Activated CD4-positive, alpha-beta T cell treated with anti-CD3 and anti-CD28 coated beads for 36 hours (primary cell): ENCODE measurements at regions of chr20 and their contacts with region 1.

Region 1: DNA sequence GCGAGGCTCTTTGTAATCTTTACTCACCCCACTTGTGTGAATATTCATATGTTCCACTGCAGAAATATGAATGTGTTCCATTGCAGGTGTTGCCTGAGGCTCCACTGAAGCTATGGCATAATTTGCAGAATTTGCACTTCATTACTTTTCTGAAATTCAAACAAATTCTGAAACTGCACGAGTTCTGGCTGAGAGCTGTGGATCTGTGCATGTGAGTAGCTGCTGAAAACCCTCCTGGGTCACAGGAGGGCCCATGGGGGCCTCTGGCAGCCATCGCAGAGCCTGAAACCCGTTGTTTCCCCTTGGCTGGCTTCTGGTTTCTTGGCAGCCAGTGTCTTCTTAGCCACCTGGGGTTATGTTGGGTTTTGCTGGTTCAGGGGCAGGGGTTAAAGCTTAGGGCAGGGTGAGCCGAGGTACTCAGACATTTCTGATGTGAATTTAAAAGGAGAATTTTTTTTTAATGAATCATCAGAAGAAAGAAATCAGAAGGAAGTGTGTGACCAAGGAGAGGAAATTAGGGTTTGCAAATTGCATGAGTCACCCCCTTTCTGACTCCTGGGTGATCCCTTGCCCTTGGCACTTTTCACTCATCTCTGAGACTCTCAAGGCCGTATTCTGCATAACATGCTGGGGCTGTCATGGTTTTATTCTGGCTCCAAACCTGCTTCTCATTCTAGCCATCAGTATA is 40.6 kb downstream of the TOX2 start:
- DNase-seq: peak; percentile 72
- ATAC-seq: peak; percentile 93
- H3K4me3 Mint-ChIP-seq: peak overlapping the region; percentile 8
- H3K27ac Mint-ChIP-seq: peak overlapping the region; percentile 71
- H3K4me1 Mint-ChIP-seq: peaks cover 76% of the 10 kb centered on the region
- H3K27me3 Mint-ChIP-seq: peaks cover 35% of the 10 kb centered on the region

Region 2: GRCh38 chr20:43914311-43915210 is 40.6 kb before region 1 on chr20 and contains the start of gene TOX2:
- CTCF ChIA-PET with region 1: no interaction called
- POLR2A ChIA-PET with region 1: no interaction called
- intact Hi-C with region 1: loop called in 1 of 2 experiments (anchors 2 kb)
- DNase-seq: peak; percentile 63
- ATAC-seq: peak; percentile 30
- H3K4me3 Mint-ChIP-seq: peak within 1 kb of the TSS; percentile 76
- H3K27ac Mint-ChIP-seq: peak within 1 kb of the TSS; percentile 53
- H3K4me1 Mint-ChIP-seq: peaks cover 28% of the 10 kb centered on the region
- H3K27me3 Mint-ChIP-seq: peaks cover 45% of the 10 kb centered on the region
- total RNA-seq, gene TOX2: 1.6 to 3.0 TPM

Region 3: DNA sequence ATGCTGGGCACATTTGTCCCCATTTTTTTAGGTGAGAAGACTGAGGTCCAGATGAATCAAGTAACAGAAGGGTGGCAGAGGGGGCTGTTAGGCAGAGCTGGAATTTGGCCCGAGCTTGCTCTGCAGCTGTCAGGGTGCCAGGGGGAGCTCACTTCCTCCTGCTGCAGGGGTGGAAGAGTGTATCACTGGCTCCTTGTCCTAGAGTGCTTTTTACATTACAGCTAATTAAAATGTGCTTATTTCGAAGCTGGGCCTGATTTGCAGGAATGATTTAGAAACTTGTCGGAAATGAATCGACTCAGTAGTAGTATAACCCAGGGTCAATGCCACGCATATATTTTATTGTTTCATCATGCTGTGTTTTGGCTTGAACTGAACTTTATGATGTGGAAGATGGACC is 29.4 kb before region 1 on chr20:
- CTCF ChIA-PET with region 1: interaction called, 4 read pairs
- POLR2A ChIA-PET with region 1: no interaction called
- intact Hi-C with region 1: loop called (anchors 1 to 5 kb)
- DNase-seq: peak; percentile 41
- ATAC-seq: peak; percentile 24
- H3K4me3 Mint-ChIP-seq: peak overlapping the region; percentile 8
- H3K27ac Mint-ChIP-seq: no peak overlapping the region
- H3K4me1 Mint-ChIP-seq: peaks cover 59% of the 10 kb centered on the region
- H3K27me3 Mint-ChIP-seq: peaks cover 27% of the 10 kb centered on the region

Region 4: DNA sequence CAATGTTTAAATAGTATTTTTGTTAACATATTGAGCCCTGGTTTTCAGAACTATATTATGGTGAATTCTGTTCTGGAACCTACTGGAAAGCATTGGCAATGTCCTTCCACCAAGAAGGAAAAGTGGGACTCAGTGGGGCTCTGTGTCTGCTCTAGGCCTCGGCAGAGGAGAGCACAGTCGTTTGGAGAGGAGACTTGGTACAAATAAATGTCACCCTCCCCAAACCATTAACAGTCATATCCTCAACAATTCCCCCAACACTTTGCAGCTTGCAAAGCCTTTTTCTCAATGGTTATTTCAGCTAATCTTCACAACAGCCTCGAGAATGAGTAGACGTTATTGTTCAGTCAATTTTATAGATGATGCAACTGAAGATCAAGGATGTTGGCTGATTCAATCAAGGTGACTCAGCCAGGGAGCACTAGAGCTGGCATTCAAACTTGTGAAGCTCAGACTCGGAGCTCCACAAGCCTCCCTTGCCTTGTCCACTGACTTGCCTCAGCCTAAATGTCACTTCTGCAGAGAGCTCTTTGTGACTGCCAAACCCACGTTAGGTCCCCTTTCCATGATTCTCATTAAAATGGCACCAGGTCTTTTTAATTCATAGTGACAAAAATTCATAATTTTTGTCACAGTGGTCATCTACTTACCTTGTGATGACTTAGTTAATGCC is 20.0 kb after region 1 on chr20:
- CTCF ChIA-PET with region 1: interaction called, 5 read pairs
- POLR2A ChIA-PET with region 1: interaction called, 6 read pairs
- intact Hi-C with region 1: loop called in 1 of 2 experiments (anchors 1 kb)
- DNase-seq: peak; percentile 69
- ATAC-seq: peak; percentile 88
- H3K4me3 Mint-ChIP-seq: no peak overlapping the region
- H3K27ac Mint-ChIP-seq: peak overlapping the region; percentile 86
- H3K4me1 Mint-ChIP-seq: peaks cover 32% of the 10 kb centered on the region
- H3K27me3 Mint-ChIP-seq: peaks cover 2% of the 10 kb centered on the region

Region 5: DNA sequence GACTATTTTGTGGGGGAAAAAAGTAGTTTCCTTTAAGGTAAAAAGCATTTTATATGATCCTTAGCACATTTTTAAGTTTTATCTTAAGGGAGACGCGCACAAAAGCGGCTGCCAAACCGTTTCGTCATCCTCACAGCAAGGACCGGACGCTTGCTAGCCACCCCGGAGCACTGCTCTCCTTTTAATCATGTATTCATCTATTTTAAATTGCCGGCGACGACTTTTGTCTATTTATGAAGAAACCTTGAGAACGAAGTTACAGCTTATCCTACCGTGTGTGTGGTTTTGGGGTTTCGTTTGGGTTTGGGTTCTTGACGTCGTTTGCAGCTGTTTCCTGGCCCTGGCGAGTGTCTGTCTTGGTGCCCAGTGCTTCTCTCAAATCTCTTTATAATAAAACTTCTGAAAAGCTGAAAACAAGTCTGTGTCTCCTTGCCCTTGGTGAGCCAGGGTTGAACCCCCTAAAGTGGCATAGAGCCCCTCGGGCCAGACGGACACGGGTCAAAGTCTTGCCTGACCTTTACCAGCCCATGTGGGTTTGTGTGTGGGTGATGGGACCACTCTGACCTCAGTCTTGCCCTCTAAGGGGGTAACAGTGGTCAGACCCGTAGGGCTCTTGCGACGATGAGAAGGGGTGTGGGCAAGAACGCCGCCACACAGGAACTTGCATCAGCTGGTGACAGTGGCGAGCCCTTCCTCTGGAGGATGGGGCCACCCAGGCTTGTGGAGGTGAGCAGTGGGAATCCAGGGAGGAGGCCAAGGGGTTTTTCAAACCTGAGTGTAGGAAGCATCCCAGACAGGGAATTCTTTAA is 114.2 kb after region 1 on chr20:
- CTCF ChIA-PET with region 1: no interaction called
- POLR2A ChIA-PET with region 1: no interaction called
- intact Hi-C with region 1: loop called in 1 of 2 experiments (anchors 2 kb)
- DNase-seq: peak; percentile 74
- ATAC-seq: peak; percentile 70
- H3K4me3 Mint-ChIP-seq: peak overlapping the region; percentile 61
- H3K27ac Mint-ChIP-seq: peak overlapping the region; percentile 94
- H3K4me1 Mint-ChIP-seq: peaks cover 68% of the 10 kb centered on the region
- H3K27me3 Mint-ChIP-seq: no peaks in the 10 kb centered on the region